ENCODE measurements at regions of chr9 and their contacts with region 1.

Region 1: DNA sequence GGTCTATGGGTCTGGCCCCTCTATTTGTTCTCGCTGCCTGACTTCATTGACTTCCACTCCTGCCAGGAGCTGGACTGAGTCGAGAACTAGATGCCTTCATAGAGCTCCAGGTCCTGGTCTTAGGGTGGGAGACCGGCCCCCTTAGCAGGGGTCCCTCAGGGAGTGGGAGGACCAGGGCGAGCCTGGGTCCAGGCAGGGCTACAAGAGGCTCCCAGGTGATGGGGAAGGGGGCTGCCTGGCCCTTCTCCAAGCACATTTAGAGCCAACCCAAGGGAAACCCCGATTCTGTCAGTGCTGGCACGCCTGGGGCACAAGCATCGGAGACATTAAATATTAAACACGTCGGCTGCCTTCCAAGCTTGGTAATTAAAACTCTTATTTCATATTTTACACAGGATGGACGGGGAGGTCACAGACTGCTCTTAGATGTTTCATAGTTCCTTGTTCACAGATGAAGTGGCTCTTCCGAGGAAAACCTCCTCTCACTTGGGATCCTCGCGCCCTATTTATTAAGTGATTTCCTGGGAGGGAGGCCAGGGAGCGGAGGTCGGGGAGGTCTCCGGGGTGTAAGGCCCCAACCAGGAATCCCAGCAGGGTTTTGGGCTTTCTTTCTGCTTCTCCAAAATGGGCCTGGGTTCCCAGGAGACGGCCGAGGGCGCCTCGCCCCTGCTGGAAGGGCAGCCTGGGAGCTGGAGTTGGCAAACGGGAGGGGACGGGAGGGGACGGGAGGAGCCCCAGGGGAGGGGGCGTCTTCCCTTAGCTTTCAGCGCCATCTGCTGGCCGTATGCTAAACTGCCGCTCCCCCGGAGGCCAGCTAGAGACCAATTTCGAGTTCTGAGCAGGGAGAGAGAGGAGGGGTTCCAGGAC is 23.4 kb upstream of the ZBTB43 start:
- DNase-seq: peak; percentile 85
- ATAC-seq: peak; percentile 88
- H3K4me3 ChIP-seq: peak overlapping the region; percentile 60; the same call in 1 of the 2 replicates
- H3K27ac ChIP-seq: no peak overlapping the region
- H3K4me1 ChIP-seq: no peaks in the 10 kb centered on the region
- H3K27me3 ChIP-seq: no peaks in the 10 kb centered on the region
- CTCF ChIP-seq: peak; percentile 84

Region 2: GRCh38 chr9:126611592-126612325 is 169.7 kb before region 1 on chr9:
- CTCF ChIA-PET with region 1: no interaction called
- POLR2A ChIA-PET with region 1: no interaction called
- intact Hi-C with region 1: loop called (anchors 5 kb)
- DNase-seq: peak; percentile 69
- ATAC-seq: peak; percentile 79
- H3K4me3 ChIP-seq: peak overlapping the region; percentile 59
- H3K27ac ChIP-seq: no peak overlapping the region
- H3K4me1 ChIP-seq: 0 out of 2 replicates have a peak, but pooled peaks cover 5% of the 10 kb centered on the region
- H3K27me3 ChIP-seq: peaks cover 35% of the 10 kb centered on the region
- CTCF ChIP-seq: peak; percentile 62

Region 3: DNA sequence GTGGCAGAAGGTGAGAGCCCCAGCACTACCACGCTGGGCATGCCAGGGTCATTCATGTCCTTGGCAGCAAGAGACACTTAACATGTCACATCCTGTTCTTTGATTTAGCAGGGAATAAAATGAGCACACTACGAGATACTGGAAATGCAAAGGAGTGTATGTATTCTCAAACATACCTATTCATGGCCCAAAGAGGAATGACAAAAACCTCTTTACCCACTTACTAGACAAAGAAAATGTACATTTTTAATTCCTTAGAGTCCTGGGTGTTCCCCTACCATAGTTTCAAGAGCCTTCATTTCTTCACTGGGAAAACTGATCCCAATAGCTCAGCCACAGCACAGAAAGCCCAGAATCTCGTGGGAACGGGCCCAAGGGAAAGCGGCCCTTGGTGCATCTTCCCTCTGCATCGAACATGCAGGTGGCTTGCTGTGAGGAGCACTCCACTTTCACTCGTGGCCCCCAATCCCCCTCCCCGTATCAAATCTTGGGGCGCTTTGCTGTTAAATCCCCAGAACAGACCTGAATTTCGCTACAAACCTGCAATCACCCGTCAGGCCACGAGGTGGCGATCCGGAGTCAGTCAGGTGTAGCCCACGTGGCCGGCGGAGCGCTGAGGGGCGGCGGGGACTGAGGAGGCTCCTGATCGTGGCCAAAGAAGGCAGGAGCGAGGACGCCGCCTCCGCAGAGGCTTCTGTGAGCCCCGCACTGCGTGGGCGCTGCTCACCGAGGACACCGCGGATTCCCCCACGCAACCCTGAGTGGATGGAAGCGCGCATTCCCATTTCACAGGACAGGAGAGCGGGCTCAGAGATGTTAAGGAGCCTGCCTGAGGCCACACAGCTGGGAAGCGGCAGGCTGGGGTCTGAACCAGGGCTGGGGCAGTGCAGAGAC is 76.3 kb before region 1 on chr9:
- CTCF ChIA-PET with region 1: interaction called, 41 read pairs
- POLR2A ChIA-PET with region 1: no interaction called
- intact Hi-C with region 1: loop called (anchors 1 kb)
- DNase-seq: peak; percentile 75
- ATAC-seq: peak; percentile 61
- H3K4me3 ChIP-seq: peak overlapping the region; percentile 57
- H3K27ac ChIP-seq: no peak overlapping the region
- H3K4me1 ChIP-seq: peaks cover 15% of the 10 kb centered on the region
- H3K27me3 ChIP-seq: no peaks in the 10 kb centered on the region
- CTCF ChIP-seq: peak; percentile 77

Measured in PC-3 (cell line).